Common myeloid progenitor, CD34-positive (primary cell): ENCODE measurements at regions of chr12 and their contacts with region 1.

Region 1: DNA sequence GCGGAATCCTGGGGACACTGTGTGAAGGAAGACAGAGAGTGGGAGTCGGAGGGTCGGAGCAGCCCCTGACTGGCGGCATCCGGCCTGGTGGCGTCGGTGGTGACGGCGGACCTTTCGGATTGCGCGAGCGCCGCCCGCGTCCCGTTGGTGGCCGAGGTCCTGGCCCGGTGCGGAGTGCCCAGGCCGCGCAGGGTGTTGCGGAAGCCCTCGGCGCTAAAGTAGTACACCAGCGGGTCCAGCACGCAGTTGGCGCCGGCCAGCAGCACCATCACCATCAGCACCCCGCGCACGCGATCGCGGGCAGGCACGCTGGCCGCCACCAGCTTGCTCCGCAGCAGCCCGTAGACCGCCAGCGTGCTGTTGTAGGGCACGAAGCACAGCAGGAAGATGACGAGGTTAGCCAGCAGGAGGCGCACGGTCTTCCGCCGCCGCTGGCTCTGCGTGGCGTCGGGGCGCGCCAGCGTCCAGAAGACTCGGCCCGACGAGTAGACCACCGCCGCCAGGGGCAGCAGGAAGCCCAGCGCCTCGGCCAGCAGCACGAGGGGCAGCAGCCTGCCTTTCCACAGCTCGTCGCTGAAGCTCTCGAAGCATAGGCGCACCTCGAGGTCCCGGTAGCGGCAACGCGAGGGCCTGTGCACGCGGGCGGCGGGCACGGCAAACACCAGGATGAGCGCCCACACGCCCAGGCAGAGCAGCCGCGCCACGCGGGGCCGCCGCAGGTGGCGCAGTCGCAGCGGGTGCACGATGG is 13.1 kb upstream of the CHD4 start:
- DNase-seq: peak; percentile 75 to 82 (median 80)
- H3K4me3 ChIP-seq: peak overlapping the region in 3 of 7 experiments; percentile 14 to 54 (median 48)
- H3K27ac ChIP-seq: no peak overlapping the region
- H3K4me1 ChIP-seq: peaks cover 4 to 34% (median 30%) of the 10 kb centered on the region in 4 experiments
- H3K27me3 ChIP-seq: no peaks in the 10 kb centered on the region

Region 2: GRCh38 chr12:6451348-6452244 is 168.7 kb before region 1 on chr12 and contains the start of gene TAPBPL:
- CTCF ChIA-PET with region 1: no interaction called
- POLR2A ChIA-PET with region 1: no interaction called
- DNase-seq: peak; percentile 78 to 92 (median 89)
- H3K4me3 ChIP-seq: peak within 1 kb of the TSS; percentile 64 to 98 (median 93)
- H3K27ac ChIP-seq: peak within 1 kb of the TSS; percentile 84 to 95
- H3K4me1 ChIP-seq: peaks cover 5 to 31% (median 28%) of the 10 kb centered on the region in 4 experiments
- H3K27me3 ChIP-seq: no peaks in the 10 kb centered on the region

Region 3: GRCh38 chr12:6632026-6632983 is 12.0 kb after region 1 on chr12:
- CTCF ChIA-PET with region 1: interaction called, 51 read pairs
- POLR2A ChIA-PET with region 1: no interaction called
- DNase-seq: peak in 2 of 3 donors; percentile 76 to 85
- H3K4me3 ChIP-seq: no peak overlapping the region
- H3K27ac ChIP-seq: peak overlapping the region in 1 of 2 experiments; percentile 27
- H3K4me1 ChIP-seq: peaks cover 9 to 49% (median 40%) of the 10 kb centered on the region in 4 experiments
- H3K27me3 ChIP-seq: no peaks in the 10 kb centered on the region

Region 4: DNA sequence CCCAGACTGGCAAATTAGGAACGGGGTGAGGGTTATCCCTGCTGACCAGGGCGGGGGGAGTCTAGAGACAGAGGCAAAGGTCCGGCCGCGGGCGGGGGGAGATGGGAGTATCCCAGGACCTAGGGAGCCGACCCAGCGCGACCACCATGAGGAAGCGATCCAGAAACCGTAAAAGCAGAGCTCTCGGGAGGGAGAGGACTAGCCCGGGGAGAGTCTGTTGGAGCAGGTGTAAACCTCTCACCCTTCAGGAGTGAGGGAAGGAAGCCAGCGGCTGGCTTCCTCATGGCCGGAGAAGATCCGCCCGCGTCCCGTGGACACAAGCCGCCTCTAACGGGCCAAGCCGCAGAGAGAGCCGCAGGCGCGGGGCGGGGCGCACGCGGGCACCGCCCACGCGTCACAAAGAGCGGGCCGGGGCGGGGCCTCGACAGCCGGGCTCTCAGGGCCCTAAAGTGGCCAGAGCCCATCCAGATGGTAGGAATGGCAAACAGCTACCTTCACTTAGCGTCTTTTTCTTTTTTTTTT is 26.8 kb after region 1 on chr12 and contains the start of gene ACRBP:
- CTCF ChIA-PET with region 1: interaction called, 69 read pairs
- POLR2A ChIA-PET with region 1: interaction called, 3 read pairs
- DNase-seq: peak; percentile 51 to 71 (median 65)
- H3K4me3 ChIP-seq: peak within 1 kb of the TSS; percentile 14 to 91 (median 77)
- H3K27ac ChIP-seq: peak within 1 kb of the TSS in 1 of 2 experiments; percentile 73
- H3K4me1 ChIP-seq: peaks cover 3 to 29% (median 15%) of the 10 kb centered on the region in 4 experiments
- H3K27me3 ChIP-seq: no peaks in the 10 kb centered on the region

Region 5: GRCh38 chr12:6662906-6663742 is 42.8 kb after region 1 on chr12 and contains the start of gene ING4:
- CTCF ChIA-PET with region 1: interaction called, 20 read pairs
- POLR2A ChIA-PET with region 1: interaction called, 3 read pairs
- DNase-seq: peak; percentile 99 to 100 (median 99)
- H3K4me3 ChIP-seq: peak within 1 kb of the TSS; percentile 57 to 95 (median 87)
- H3K27ac ChIP-seq: peak within 1 kb of the TSS; percentile 90 to 91
- H3K4me1 ChIP-seq: peaks cover 8 to 16% (median 13%) of the 10 kb centered on the region in 4 experiments
- H3K27me3 ChIP-seq: no peaks in the 10 kb centered on the region

Region 6: DNA sequence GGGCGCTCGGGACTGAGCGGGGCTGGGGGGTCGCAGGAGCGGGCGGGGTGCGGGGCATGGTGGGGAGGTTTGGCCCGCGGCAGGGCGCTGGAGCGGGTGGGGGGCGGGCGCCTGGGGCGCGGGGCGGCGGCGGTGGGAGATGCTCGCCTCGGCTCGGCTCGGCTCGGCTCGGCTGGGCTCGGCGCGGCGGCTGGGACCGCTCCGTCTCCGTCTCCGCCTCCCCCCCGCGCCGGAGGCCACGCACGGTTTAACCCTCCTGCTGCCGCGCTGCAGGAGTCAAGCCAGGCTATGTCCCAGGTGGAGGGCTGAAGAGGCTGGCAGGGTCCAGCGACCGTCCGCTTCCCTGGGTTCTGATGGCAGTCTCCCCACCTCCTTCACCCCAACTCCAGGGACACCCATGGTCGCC is 80.3 kb after region 1 on chr12 and contains the start of gene PIANP:
- CTCF ChIA-PET with region 1: interaction called, 11 read pairs
- POLR2A ChIA-PET with region 1: no interaction called
- DNase-seq: peak in 2 of 3 donors; percentile 58 to 67
- H3K4me3 ChIP-seq: peak within 1 kb of the TSS in 6 of 7 experiments; percentile 32 to 68 (median 51)
- H3K27ac ChIP-seq: no peak within 1 kb of the TSS
- H3K4me1 ChIP-seq: peaks cover 0 to 20% (median 12%) of the 10 kb centered on the region in 4 experiments
- H3K27me3 ChIP-seq: peaks cover 2 to 79% (median 34%) of the 10 kb centered on the region in 5 experiments